ENCODE measurements at regions of chr7 and their contacts with region 1.

Region 1: DNA sequence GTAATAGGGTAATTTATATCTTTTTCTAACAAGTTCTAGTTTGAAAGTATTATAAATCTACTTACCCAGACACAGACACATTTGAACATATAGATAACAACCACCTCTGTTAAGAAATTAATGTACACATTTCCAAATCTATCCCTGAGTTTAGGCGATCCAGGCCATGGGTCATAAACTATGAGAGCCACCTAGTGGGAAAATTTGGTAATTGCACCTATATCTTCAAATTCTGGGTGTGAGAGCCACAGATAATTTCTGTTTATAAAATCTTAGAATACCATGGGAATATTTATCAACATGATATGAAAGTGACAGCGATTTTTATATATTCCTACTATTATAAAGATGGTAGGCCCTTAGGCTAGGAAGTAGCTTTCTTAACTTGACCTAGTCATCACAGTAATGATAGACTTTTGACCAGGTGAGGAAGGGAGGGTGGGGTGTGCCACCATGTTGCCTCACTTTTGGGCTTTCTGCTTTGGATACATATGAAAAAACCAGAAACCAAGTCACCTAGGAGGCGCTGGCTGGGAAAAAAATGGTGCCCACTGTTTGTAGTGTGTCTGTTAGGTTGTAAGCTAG is 8.0 kb upstream of the EPHA1 start:
- DNase-seq: peak; percentile 78 to 82 (median 82)
- ATAC-seq: peak; percentile 78
- H3K4me3 ChIP-seq: no peak overlapping the region
- H3K27ac ChIP-seq: no peak overlapping the region
- H3K4me1 ChIP-seq: peaks cover 0 to 8% of the 10 kb centered on the region in 2 experiments; a peak in 1 of 5 replicates
- H3K27me3 ChIP-seq: no peaks in the 10 kb centered on the region
- CTCF ChIP-seq: peak; percentile 77 to 94 (median 80)
- EP300 ChIP-seq: no peak
- POLR2A ChIP-seq: no peak
- RAD21 ChIP-seq: peak; percentile 91

Region 2: DNA sequence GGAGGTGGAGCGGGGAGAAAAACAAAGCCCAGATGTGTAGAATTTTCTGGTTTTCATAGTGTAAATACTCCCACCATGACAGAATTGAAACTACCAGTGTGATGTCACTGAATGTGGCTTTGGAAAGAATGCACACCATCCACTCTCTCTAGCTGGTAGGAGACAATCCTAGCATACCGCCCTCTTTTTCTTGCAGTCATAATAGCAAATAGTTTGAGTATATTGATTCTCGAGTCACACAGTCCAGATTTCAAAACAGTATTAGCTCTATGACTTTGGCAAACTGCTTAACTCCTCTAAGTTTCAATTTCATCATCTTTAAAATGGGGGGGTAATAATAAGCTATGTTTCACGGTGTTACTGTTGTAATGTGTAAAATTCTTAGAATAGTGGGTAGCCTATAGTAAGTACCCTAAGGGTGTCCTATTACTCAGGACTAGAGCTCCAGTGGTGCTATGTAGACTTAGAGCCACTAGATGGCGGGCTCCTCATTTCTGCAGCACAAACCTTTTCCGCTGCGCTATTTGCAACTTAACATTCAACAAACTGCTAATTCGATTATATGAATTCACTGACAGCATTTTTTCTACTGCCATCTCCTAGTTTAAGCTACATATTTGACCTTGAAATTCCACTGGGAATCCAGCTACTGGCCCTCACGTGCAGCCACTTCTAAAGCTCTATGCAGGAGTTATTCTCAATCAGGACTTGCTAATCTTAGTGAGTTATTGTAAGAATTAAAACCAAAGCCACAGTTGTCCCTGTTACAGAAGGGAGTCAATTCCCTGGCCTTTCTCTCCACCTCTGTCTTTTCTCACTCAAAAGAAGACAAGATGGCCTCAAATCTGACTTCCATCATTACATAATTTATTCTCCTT is 176.1 kb before region 1 on chr7:
- CTCF ChIA-PET with region 1: interaction called, 12 read pairs
- POLR2A ChIA-PET with region 1: no interaction called
- in situ Hi-C with region 1: no loop called
- intact Hi-C with region 1: loop called (anchors 1 kb)
- DNase-seq: peak; percentile 78 to 87 (median 84)
- ATAC-seq: peak; percentile 97
- H3K4me3 ChIP-seq: no peak overlapping the region
- H3K27ac ChIP-seq: no peak overlapping the region
- H3K4me1 ChIP-seq: no peaks in the 10 kb centered on the region; a peak in 1 of 5 replicates
- H3K27me3 ChIP-seq: no peaks in the 10 kb centered on the region
- CTCF ChIP-seq: peak; percentile 95 to 98 (median 95)
- EP300 ChIP-seq: no peak
- POLR2A ChIP-seq: no peak
- RAD21 ChIP-seq: peak; percentile 98 to 99

Region 3: GRCh38 chr7:143256932-143257331 is 159.7 kb before region 1 on chr7:
- CTCF ChIA-PET with region 1: no interaction called
- POLR2A ChIA-PET with region 1: no interaction called
- in situ Hi-C with region 1: no loop called
- intact Hi-C with region 1: loop called (anchors 1 kb)
- DNase-seq: peak; percentile 72 to 92 (median 82)
- ATAC-seq: peak; percentile 87
- H3K4me3 ChIP-seq: no peak overlapping the region
- H3K27ac ChIP-seq: peak overlapping the region; percentile 84
- H3K4me1 ChIP-seq: peaks cover 5 to 45% of the 10 kb centered on the region in 2 experiments; a peak in 4 of 5 replicates
- H3K27me3 ChIP-seq: no peaks in the 10 kb centered on the region
- CTCF ChIP-seq: no peak
- EP300 ChIP-seq: peak; percentile 68; the same call in 1 of the 2 replicates
- POLR2A ChIP-seq: no peak
- RAD21 ChIP-seq: no peak

Region 4: DNA sequence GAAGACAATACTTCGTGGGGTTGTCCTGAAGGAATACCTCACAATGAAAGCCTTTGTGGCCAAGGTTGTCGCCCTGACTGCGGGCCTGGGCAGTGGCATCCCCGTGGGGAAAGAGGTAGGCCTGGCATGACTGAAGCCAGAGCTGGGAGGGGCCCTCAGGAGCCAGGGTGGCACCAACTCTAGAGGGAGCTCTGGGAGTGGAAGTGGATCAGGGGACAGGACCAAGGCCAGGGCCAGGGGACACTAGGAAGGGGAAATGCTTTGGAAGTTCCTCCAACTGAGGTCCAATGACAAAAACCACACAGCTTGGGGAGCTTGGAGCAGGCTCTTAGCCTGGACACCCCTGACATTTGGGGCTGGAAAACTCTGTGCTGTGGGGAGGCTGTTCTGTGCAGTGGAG is 94.9 kb before region 1 on chr7:
- CTCF ChIA-PET with region 1: interaction called, 3 read pairs
- POLR2A ChIA-PET with region 1: no interaction called
- in situ Hi-C with region 1: no loop called
- intact Hi-C with region 1: loop called (anchors 5 kb)
- DNase-seq: no peak
- ATAC-seq: peak; percentile 27; the same call in 2 of the 3 replicates
- H3K4me3 ChIP-seq: no peak overlapping the region
- H3K27ac ChIP-seq: no peak overlapping the region
- H3K4me1 ChIP-seq: peaks cover 0 to 3% of the 10 kb centered on the region in 2 experiments; a peak in 1 of 5 replicates
- H3K27me3 ChIP-seq: peaks cover 45 to 71% of the 10 kb centered on the region in 2 experiments; a peak in 4 of 5 replicates
- CTCF ChIP-seq: peak; percentile 22 to 43 (median 24); a peak in 3 of 6 replicates
- EP300 ChIP-seq: no peak
- POLR2A ChIP-seq: no peak
- RAD21 ChIP-seq: peak; percentile 38 to 55

Region 5: DNA sequence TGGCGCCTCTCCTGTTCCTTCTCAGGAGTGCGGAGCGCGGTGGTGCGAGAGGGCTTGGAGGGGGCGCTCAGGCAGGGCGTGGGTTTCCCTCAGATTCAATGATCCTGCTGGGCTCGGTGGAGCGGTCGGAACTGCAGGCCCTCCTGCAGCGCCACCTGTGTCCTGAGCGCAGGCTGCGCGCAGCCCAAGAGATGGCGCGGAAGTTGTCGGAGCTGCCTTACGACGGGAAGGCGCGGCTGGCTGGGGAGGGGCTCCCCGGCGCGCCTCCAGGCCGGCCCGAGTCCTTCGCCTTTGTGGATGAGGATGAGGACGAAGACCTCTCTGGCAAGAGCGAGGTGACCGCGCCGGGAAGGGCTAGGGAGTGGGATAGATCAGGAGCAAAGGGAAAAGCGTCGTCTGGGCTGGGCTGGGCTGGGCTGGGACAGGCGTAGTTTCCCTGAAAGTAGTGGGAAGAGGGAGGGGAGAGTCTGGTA is 71.2 kb before region 1 on chr7:
- CTCF ChIA-PET with region 1: interaction called, 3 read pairs
- POLR2A ChIA-PET with region 1: no interaction called
- in situ Hi-C with region 1: no loop called
- intact Hi-C with region 1: loop called (anchors 2 kb)
- DNase-seq: peak; percentile 63 to 90 (median 76)
- ATAC-seq: peak; percentile 100
- H3K4me3 ChIP-seq: peak overlapping the region; percentile 1; the same call in 1 of the 2 replicates
- H3K27ac ChIP-seq: no peak overlapping the region
- H3K4me1 ChIP-seq: peaks cover 0 to 7% of the 10 kb centered on the region in 2 experiments; a peak in 2 of 5 replicates
- H3K27me3 ChIP-seq: peaks cover 33 to 53% of the 10 kb centered on the region in 2 experiments
- CTCF ChIP-seq: peak; percentile 81 to 96 (median 85)
- EP300 ChIP-seq: no peak
- POLR2A ChIP-seq: no peak
- RAD21 ChIP-seq: peak in 1 of 2 experiments; percentile 53; a peak in 2 of 4 replicates

Region 6: GRCh38 chr7:143367972-143368371 is 48.7 kb before region 1 on chr7:
- CTCF ChIA-PET with region 1: no interaction called
- POLR2A ChIA-PET with region 1: no interaction called
- in situ Hi-C with region 1: no loop called
- intact Hi-C with region 1: no loop called
- DNase-seq: no peak
- ATAC-seq: no peak
- H3K4me3 ChIP-seq: no peak overlapping the region
- H3K27ac ChIP-seq: no peak overlapping the region
- H3K4me1 ChIP-seq: peaks cover under 1 to 9% of the 10 kb centered on the region in 2 experiments; a peak in 2 of 5 replicates
- H3K27me3 ChIP-seq: peaks cover 56 to 58% of the 10 kb centered on the region in 2 experiments
- CTCF ChIP-seq: no peak
- EP300 ChIP-seq: no peak
- POLR2A ChIP-seq: no peak
- RAD21 ChIP-seq: no peak

Region 7: GRCh38 chr7:143380255-143380645 is 36.4 kb before region 1 on chr7:
- CTCF ChIA-PET with region 1: interaction called, 4 read pairs
- POLR2A ChIA-PET with region 1: interaction called, 5 read pairs
- in situ Hi-C with region 1: no loop called
- intact Hi-C with region 1: loop called (anchors 1 kb)
- DNase-seq: peak; percentile 81 to 94 (median 88)
- ATAC-seq: peak; percentile 80
- H3K4me3 ChIP-seq: peak overlapping the region; percentile 72
- H3K27ac ChIP-seq: peak overlapping the region; percentile 94
- H3K4me1 ChIP-seq: peaks cover 21 to 31% of the 10 kb centered on the region in 2 experiments; a peak in 4 of 5 replicates
- H3K27me3 ChIP-seq: peaks cover 0 to 7% of the 10 kb centered on the region in 2 experiments; a peak in 1 of 5 replicates
- CTCF ChIP-seq: peak; percentile 94 to 98 (median 95)
- EP300 ChIP-seq: no peak; the same call in 1 of the 2 replicates
- POLR2A ChIP-seq: peak; percentile 44; the same call in 1 of the 2 replicates
- RAD21 ChIP-seq: peak; percentile 47 to 49

Region 8: DNA sequence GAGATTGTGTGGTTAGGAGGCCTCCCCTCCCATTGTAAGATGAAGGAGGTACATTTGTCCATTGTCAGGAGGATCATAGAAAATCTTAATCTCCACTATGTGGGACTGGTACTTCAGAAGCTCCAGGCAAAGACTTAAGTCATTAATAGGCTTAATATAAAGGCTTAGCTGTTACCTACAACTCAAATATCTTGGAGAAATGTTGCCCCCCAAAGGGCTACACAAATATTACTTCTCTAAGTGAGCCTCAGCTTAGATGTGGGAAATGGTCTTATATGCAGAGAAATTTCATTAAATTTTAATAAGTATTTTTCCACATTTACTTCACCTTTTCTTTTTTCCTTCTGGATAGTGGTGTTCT is 88.3 kb after region 1 on chr7:
- CTCF ChIA-PET with region 1: no interaction called
- POLR2A ChIA-PET with region 1: no interaction called
- in situ Hi-C with region 1: no loop called
- intact Hi-C with region 1: loop called (anchors 5 kb)
- DNase-seq: no peak
- ATAC-seq: peak; percentile 63
- H3K4me3 ChIP-seq: no peak overlapping the region
- H3K27ac ChIP-seq: peak overlapping the region; percentile 57; the same call in 2 of the 3 replicates
- H3K4me1 ChIP-seq: peaks cover 5 to 25% of the 10 kb centered on the region in 2 experiments
- H3K27me3 ChIP-seq: no peaks in the 10 kb centered on the region
- CTCF ChIP-seq: peak in 2 of 3 experiments; percentile 43 to 46; a peak in 4 of 6 replicates
- EP300 ChIP-seq: no peak
- POLR2A ChIP-seq: no peak
- RAD21 ChIP-seq: peak; percentile 32 to 57; a peak in 3 of 4 replicates

Region 9: GRCh38 chr7:144670218-144670617 is 1253.6 kb after region 1 on chr7:
- CTCF ChIA-PET with region 1: no interaction called
- POLR2A ChIA-PET with region 1: no interaction called
- in situ Hi-C with region 1: no loop called
- intact Hi-C with region 1: no loop called
- DNase-seq: peak in 1 of 4 experiments; percentile 1
- ATAC-seq: no peak
- H3K4me3 ChIP-seq: no peak overlapping the region
- H3K27ac ChIP-seq: no peak overlapping the region
- H3K4me1 ChIP-seq: no peaks in the 10 kb centered on the region
- H3K27me3 ChIP-seq: no peaks in the 10 kb centered on the region
- CTCF ChIP-seq: no peak
- EP300 ChIP-seq: no peak
- POLR2A ChIP-seq: no peak
- RAD21 ChIP-seq: no peak

Measured in K562 (cell line).